Right ventricle myocardium inferior (tissue), 1 donor: ENCODE measurements at regions of chr22 and their contacts with region 1.

Region 1: GRCh38 chr22:36065775-36066559 is 37.3 kb upstream of the RBFOX2 start:
- DNase-seq: peak; percentile 91
- ATAC-seq: peak; percentile 92

Region 2: DNA sequence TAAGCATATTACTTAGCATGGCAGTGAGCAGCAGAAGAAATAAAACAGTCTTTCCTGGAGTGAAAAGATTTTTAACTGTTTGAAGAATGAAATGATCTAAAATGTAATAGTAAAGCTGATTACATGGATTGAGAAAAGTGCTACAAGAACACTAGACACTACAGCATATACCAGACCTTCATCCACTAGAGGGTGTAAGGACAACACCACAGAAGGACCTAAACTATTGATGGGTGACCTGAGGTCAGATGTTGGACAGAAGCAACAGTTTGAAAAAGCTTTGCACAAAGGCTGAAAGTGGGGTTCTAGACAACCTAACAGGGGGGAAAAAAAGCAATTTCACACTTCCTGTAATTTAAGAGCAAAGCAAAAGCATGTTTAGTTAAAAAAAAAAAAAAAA is 135.0 kb before region 1 on chr22:
- intact Hi-C with region 1: loop called (anchors 1 kb)
- DNase-seq: no peak
- ATAC-seq: peak; percentile 94

Region 3: GRCh38 chr22:36028646-36029405 is 37.1 kb before region 1 on chr22 and contains the start of gene RBFOX2:
- intact Hi-C with region 1: loop called (anchors 2 kb)
- DNase-seq: peak; percentile 95
- ATAC-seq: peak; percentile 98
- total RNA-seq, gene RBFOX2: 84.4 TPM

Region 4: GRCh38 chr22:36123673-36124630 is 58.0 kb after region 1 on chr22:
- intact Hi-C with region 1: loop called (anchors 2 kb)
- DNase-seq: peak; percentile 97
- ATAC-seq: peak; percentile 96